HCT116 (cell line): ENCODE measurements at regions of chr1 and their contacts with region 1.

Region 1: DNA sequence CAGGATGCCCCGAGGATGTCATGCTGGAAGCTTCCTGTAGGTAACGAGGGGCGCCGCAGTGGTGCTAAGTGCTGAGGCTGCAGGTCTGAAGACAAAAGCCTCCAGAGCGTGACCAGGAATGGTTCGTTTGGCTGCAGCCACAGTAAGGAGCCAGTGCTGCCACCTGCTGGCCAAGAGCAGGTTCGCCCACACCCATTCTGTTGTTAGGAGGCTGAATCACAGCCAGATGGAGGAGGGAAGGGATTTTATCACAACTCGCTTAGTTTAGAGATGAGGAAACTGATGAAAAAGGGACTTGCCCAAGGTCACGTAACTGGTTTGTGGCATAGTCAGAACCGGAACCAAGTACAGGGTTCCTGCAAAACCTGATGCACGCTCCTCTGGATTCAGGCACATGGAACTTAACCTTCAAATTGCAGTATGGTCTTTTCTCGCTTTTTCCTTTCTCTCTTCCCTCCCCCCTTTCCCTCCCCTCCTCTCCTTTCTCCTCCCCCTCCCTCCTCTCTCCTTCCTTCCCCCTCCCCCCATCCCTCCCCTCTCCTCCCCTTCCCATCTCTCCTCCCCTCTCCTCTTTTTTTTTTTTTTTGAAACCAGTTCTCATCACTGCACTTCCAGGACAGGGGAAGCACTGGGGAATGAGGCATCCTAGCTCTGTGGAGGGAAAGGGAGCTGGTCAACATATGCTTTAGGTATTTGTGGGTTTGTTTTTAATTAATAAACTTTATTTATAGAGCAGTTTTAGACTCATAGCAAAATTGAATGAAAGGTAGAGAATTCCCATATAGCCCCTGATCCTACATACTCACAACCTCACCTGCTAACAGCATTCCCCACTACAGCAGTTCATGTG is 81.8 kb downstream of the MPZL1 start:
- DNase-seq: peak; percentile 90
- ATAC-seq: peak; percentile 98
- H3K4me3 ChIP-seq: no peak overlapping the region
- H3K27ac ChIP-seq: no peak overlapping the region
- H3K4me1 ChIP-seq: peaks cover 0 to 7% of the 10 kb centered on the region in 2 experiments; a peak in 2 of 4 replicates
- H3K27me3 ChIP-seq: no peaks in the 10 kb centered on the region
- CTCF ChIP-seq: peak; percentile 89 to 99 (median 98)
- POLR2A ChIP-seq: no peak
- RAD21 ChIP-seq: peak; percentile 81

Region 2: DNA sequence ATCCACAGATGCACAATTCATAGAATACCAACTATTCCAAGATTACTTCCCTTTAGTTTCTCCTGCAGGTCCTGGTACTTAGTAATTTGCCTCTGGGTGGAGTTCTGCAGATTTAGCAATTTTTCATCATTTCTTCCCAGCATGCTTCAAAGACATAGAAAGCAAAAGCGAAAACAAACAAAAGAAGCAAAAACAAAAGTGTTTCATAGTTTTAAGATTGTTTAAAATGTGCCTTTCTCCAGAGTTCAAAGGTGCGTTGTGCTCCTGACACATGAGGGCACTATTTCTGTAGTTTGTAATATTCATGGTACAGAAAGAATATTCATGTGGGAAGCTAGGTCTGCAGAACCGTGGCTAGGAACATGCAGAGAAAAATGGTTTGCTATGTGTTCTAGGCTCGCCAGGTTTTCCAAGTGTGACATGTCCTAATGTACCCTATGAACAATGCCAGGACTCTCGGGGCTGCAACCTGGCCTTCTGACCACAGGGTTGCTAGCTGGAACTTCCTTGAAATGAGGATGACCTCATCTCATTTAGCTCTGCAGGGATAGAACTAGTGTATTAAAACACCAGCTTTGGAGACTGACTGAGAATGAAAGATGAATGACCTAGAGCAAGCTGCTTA is 203.5 kb before region 1 on chr1:
- CTCF ChIA-PET with region 1: no interaction called
- POLR2A ChIA-PET with region 1: no interaction called
- RAD21 ChIA-PET with region 1: no interaction called
- intact Hi-C with region 1: loop called (anchors 5 kb)
- DNase-seq: peak; percentile 6
- ATAC-seq: no peak
- H3K4me3 ChIP-seq: no peak overlapping the region
- H3K27ac ChIP-seq: no peak overlapping the region
- H3K4me1 ChIP-seq: no peaks in the 10 kb centered on the region
- H3K27me3 ChIP-seq: no peaks in the 10 kb centered on the region
- CTCF ChIP-seq: peak in 2 of 3 experiments; percentile 42 to 53; a peak in 4 of 6 replicates
- POLR2A ChIP-seq: no peak
- RAD21 ChIP-seq: peak; percentile 73

Region 3: GRCh38 chr1:167715157-167715999 is 88.2 kb before region 1 on chr1:
- CTCF ChIA-PET with region 1: interaction called, 6 read pairs
- POLR2A ChIA-PET with region 1: no interaction called
- RAD21 ChIA-PET with region 1: no interaction called
- intact Hi-C with region 1: loop called (anchors 1 kb)
- DNase-seq: peak; percentile 86
- ATAC-seq: peak; percentile 57
- H3K4me3 ChIP-seq: peak overlapping the region; percentile 52 to 58
- H3K27ac ChIP-seq: peak overlapping the region; percentile 67
- H3K4me1 ChIP-seq: peaks cover 10 to 32% of the 10 kb centered on the region in 2 experiments
- H3K27me3 ChIP-seq: no peaks in the 10 kb centered on the region
- CTCF ChIP-seq: peak in 2 of 3 experiments; percentile 86; a peak in 4 of 6 replicates
- POLR2A ChIP-seq: no peak
- RAD21 ChIP-seq: no peak

Region 4: GRCh38 chr1:167950569-167950968 is 147.0 kb after region 1 on chr1:
- CTCF ChIA-PET with region 1: no interaction called
- POLR2A ChIA-PET with region 1: no interaction called
- RAD21 ChIA-PET with region 1: no interaction called
- intact Hi-C with region 1: no loop called
- DNase-seq: no peak
- ATAC-seq: no peak
- H3K4me3 ChIP-seq: no peak overlapping the region
- H3K27ac ChIP-seq: no peak overlapping the region
- H3K4me1 ChIP-seq: peaks cover 0 to 7% of the 10 kb centered on the region in 2 experiments; a peak in 3 of 4 replicates
- H3K27me3 ChIP-seq: no peaks in the 10 kb centered on the region
- CTCF ChIP-seq: no peak
- POLR2A ChIP-seq: no peak
- RAD21 ChIP-seq: no peak